ENCODE measurements at regions of chr2 and their contacts with region 1.

Region 1: DNA sequence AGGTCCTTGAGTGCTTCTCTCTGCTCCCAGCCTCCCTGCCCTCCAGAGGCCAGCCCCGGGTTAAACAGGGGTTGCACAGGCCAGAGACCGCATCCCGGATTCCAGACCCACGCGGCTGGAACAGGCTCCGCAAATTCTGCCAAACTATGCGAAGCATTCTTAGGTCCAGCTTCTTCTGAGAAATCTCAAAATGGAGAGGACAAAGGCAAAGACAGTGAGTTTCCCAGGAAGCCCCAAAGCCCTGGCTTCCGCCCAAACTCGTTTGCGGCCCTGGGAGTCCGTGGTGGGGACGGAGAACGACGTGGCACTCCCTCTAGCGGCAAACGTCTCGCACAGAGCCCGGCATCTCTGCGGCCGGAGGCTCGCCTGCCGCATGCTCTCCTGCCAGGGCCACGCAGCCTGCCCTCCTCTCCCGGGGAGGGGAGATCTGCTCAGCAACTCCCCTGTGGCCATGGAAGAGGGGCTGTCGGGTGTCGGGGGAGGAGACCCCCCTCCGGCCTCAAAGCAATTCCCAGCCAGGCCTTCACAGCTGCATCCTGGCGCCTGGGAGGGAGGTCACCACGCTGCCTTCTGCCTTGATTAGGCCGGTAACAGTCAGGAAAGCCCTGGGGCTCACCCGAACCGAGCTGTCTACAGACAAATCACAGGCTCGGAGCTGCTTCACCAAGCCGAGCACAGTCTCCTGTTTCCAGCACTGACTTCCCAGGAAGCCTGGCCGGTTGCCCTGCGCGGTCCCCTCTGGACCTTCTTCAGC is 33.4 kb upstream of the KLHL29 start:
- DNase-seq: peak; percentile 90
- ATAC-seq: peak; percentile 92

Region 2: GRCh38 chr2:22904126-22904684 is 447.4 kb before region 1 on chr2:
- intact Hi-C with region 1: loop called (anchors 10 kb)
- DNase-seq: no peak
- ATAC-seq: no peak

Region 3: DNA sequence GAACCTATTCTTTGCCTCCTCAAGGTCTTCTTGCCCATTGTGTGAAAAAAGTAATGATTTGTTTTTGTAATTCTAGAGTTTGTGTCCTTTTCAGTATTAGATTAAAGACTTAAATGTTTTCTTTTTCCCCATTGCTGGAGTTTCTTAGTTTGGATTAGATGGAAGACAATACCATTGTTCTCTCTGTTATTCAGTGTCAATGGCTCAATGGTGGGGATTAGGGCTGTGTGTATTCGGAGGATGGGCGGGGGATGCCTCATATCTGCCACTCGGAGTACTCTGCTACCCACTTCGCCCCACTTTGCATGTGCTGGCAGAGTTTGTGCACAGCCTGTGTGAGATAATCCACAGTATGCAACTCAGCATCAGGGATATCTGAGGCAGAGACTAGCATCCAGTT is 123.5 kb after region 1 on chr2:
- intact Hi-C with region 1: no loop called
- DNase-seq: no peak
- ATAC-seq: no peak